ENCODE measurements at regions of chr10 and their contacts with region 1.

Region 1: DNA sequence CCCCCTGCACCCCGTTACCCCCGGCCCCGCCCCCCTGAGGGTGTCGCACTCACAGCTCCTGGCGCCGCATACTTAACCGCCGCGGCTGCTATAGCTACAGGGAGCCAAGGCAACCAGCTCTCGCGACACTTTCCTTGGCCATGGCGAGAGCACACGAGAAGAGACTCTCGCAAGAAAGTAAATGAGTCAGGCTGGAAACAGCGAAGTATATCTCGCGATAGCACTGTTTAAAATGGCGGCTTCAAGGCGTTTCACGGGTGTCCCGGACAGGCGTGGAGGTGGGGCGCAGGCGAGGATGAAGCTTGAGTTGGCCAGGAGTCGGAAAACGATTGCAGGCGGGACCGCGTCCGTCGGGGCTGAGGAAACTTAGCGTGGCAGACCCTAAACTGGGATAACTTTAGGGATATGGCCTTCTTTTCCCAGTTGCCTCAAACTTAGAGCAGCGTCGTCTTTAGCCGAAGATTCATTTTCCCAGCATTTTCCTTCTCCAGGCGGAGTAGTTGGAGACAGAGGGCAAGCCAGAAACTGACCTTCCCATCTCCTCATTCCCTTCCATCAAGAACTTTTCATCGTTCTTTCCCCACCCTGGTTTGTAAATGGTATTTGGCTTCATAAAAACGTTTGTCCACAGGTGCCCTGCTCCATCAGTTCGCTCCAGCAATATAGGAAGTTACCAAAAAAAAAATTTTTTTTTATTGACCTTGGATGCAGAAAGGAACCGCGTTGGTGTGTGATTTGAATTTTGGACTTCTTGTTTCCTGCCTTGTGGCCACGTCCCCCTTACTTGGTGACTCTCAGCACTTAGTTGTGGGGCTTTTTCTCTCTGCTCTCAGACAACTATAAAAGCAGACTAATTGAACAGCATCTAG is 15.2 kb downstream of the MYOZ1 start:
- DNase-seq: peak; percentile 98
- H3K4me3 Mint-ChIP-seq: peak overlapping the region; percentile 96
- H3K27ac Mint-ChIP-seq: peak overlapping the region; percentile 96
- H3K4me1 Mint-ChIP-seq: peaks cover 16% of the 10 kb centered on the region
- H3K27me3 Mint-ChIP-seq: no peaks in the 10 kb centered on the region

Region 2: GRCh38 chr10:73246783-73247508 is 379.2 kb before region 1 on chr10 and contains the start of gene DNAJC9:
- intact Hi-C with region 1: loop called (anchors 2 kb)
- DNase-seq: peak; percentile 99
- H3K4me3 Mint-ChIP-seq: peak within 1 kb of the TSS; percentile 98
- H3K27ac Mint-ChIP-seq: peak within 1 kb of the TSS; percentile 97
- H3K4me1 Mint-ChIP-seq: peaks cover 55% of the 10 kb centered on the region
- H3K27me3 Mint-ChIP-seq: no peaks in the 10 kb centered on the region
- total RNA-seq, gene DNAJC9: 54.2 and 56.6 TPM in 2 replicates

Region 3: GRCh38 chr10:73358331-73359279 is 267.5 kb before region 1 on chr10 and contains the start of gene CFAP70:
- intact Hi-C with region 1: loop called (anchors 5 kb)
- DNase-seq: peak; percentile 98
- H3K4me3 Mint-ChIP-seq: peak within 1 kb of the TSS; percentile 93
- H3K27ac Mint-ChIP-seq: peak within 1 kb of the TSS; percentile 89
- H3K4me1 Mint-ChIP-seq: peaks cover 16% of the 10 kb centered on the region
- H3K27me3 Mint-ChIP-seq: peaks cover 15% of the 10 kb centered on the region
- total RNA-seq, gene CFAP70: 0.17 and 0.33 TPM in 2 replicates

Region 4: DNA sequence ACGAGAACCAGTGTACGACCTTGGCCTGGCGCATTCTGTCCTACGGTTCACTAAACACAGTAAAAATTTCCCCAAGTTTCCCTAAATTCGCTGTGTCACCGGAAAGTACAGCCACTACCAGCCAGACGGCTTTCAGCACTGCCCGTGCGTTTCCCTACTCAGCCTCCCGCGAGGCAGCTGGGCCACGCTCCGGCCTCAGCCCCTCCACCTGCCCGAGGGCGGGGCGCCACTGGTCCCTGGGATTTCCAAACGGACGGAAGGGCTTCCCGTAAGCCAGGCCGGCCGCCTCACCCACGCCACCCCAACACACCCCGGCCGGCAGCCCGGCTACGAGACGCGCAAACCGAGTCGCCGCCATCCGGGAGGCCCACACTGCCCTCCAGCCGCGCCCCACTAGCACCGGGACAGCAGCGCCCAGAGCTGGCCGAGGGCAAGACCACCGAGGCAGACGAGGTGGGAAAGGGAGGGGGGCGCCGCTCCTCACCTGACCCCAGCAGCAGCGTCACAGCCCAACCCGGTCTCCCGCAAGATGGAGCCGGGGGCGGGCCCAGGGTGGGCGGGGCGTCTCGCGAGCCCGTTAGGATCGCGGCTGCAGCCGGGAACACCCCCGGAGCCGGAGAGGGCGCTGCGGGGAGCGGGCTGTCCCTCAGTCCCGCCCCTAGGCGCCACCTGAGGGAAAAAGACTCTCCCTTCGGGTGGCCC is 212.4 kb before region 1 on chr10 and contains the start of gene ANXA7:
- intact Hi-C with region 1: loop called (anchors 5 kb)
- DNase-seq: peak; percentile 97
- H3K4me3 Mint-ChIP-seq: peak within 1 kb of the TSS; percentile 92
- H3K27ac Mint-ChIP-seq: peak within 1 kb of the TSS; percentile 90
- H3K4me1 Mint-ChIP-seq: peaks cover 33% of the 10 kb centered on the region
- H3K27me3 Mint-ChIP-seq: no peaks in the 10 kb centered on the region
- total RNA-seq, gene ANXA7: 169 and 171 TPM in 2 replicates

Measured in activated CD4-positive, alpha-beta T cell treated with anti-CD3 and anti-CD28 coated beads, Interleukin-2, amount 10 ng/mL, durations not matched to agents 24 days and 14 days (primary cell).